ENCODE measurements at regions of chr6 and their contacts with region 1.

Region 1: GRCh38 chr6:107318100-107318736 is 141.1 kb downstream of the PDSS2 start:
- DNase-seq: peak in 3 of 9 experiments; percentile 7 to 49 (median 34)
- ATAC-seq: peak; percentile 49
- H3K4me3 ChIP-seq: no peak overlapping the region
- H3K4me3 Mint-ChIP-seq: no peak overlapping the region
- H3K27ac ChIP-seq: no peak overlapping the region
- H3K27ac Mint-ChIP-seq: no peak overlapping the region
- H3K4me1 ChIP-seq: no peaks in the 10 kb centered on the region
- H3K4me1 Mint-ChIP-seq: peaks cover 3% of the 10 kb centered on the region
- H3K27me3 ChIP-seq: no peaks in the 10 kb centered on the region
- H3K27me3 Mint-ChIP-seq: no peaks in the 10 kb centered on the region
- CTCF ChIP-seq: no peak

Region 2: GRCh38 chr6:107144014-107144413 is 174.2 kb before region 1 on chr6:
- CTCF ChIA-PET with region 1: no interaction called
- POLR2A ChIA-PET with region 1: no interaction called
- intact Hi-C with region 1: no loop called
- DNase-seq: no peak
- ATAC-seq: no peak
- H3K4me3 ChIP-seq: no peak overlapping the region
- H3K4me3 Mint-ChIP-seq: no peak overlapping the region
- H3K27ac ChIP-seq: no peak overlapping the region
- H3K27ac Mint-ChIP-seq: no peak overlapping the region
- H3K4me1 ChIP-seq: no peaks in the 10 kb centered on the region
- H3K4me1 Mint-ChIP-seq: no peaks in the 10 kb centered on the region
- H3K27me3 ChIP-seq: no peaks in the 10 kb centered on the region
- H3K27me3 Mint-ChIP-seq: no peaks in the 10 kb centered on the region
- CTCF ChIP-seq: no peak

Region 3: DNA sequence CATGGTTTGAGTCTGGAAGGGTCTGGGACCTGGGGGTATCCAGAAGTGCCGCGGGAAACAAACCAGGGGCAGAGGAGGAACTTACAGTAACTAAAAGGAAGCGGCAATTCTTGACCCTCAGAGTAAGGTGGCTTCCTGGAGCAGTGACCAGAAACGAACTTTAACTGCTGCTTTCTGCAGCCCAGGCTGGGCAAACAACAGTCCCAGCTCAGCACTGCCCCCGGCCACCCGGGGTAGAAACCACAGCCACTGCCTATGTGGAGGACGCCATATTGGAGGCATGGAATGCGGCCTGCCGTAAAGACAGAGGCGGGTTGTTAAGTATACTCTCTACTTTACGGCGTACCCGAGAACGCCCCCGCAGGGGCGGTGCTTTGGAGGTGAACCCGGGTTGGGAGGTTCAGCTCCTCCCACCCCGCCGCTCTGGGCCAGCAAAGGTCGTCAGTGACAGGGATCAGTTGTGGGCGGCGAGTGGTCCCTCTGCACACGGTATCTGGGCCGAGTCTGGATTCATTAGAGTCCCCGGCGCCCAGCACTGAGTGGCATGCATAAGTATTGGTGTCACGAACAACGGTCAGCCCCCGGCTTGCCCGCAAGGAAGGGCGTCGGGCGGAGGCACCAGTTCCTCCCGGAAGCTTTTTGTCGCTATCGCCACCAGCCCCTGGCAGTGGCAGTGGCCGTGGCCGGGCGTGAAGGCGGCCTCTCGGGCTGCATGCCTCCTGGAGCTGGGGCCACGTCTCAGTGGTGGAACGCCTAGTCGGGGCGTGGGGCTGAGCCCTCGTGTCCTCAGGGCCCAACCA is 141.3 kb after region 1 on chr6 and contains the start of gene PDSS2:
- CTCF ChIA-PET with region 1: no interaction called
- POLR2A ChIA-PET with region 1: no interaction called
- intact Hi-C with region 1: no loop called
- DNase-seq: peak; percentile 93 to 99 (median 96)
- ATAC-seq: peak; percentile 96
- H3K4me3 ChIP-seq: peak within 1 kb of the TSS; percentile 93 to 94
- H3K4me3 Mint-ChIP-seq: peak within 1 kb of the TSS; percentile 98
- H3K27ac ChIP-seq: peak within 1 kb of the TSS; percentile 69 to 82
- H3K27ac Mint-ChIP-seq: peak within 1 kb of the TSS; percentile 98
- H3K4me1 ChIP-seq: peaks cover 14% of the 10 kb centered on the region
- H3K4me1 Mint-ChIP-seq: peaks cover 31% of the 10 kb centered on the region
- H3K27me3 ChIP-seq: no peaks in the 10 kb centered on the region
- H3K27me3 Mint-ChIP-seq: no peaks in the 10 kb centered on the region
- CTCF ChIP-seq: peak; percentile 28
- total RNA-seq, gene PDSS2: 3.7 to 4.7 TPM

Region 4: DNA sequence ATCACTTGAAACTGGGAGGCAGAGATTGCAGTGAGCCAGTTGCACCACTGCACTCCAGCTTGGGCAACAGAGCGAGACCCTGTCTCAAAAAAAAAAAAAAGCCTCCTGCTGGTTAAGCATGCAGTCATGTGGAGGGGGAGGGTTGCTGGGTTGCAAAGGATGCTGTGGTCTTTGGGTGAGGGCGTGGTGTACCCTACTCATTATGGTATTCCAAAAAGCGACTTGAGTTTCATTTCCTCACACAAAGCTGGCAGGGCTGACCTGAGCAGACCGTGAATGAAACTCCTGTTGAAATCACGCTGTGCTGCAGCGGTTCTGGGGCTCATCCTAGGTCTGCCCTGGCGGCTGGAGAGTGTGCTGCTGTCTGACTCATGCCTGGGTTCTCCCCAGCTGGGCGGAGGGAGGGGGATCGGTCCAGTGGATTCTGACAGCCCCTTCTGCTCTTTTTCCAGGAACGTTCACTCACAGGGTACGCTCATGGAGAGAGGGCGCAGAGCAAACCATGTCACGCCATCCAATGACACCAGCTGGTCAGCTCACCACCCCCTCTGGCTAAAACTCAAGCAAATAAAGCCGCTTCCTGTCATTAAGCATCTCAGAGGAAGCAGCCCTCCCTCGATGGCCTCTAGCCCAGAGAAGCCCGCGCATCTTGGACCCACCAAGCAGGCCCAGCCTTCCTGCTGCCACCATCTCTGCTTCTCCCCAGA is 339.7 kb after region 1 on chr6:
- CTCF ChIA-PET with region 1: no interaction called
- POLR2A ChIA-PET with region 1: no interaction called
- intact Hi-C with region 1: loop called in 1 of 2 experiments (anchors 5 kb)
- DNase-seq: peak in 8 of 9 experiments; percentile 29 to 68 (median 52)
- ATAC-seq: peak; percentile 90
- H3K4me3 ChIP-seq: peak overlapping the region; percentile 27 to 49
- H3K4me3 Mint-ChIP-seq: peak overlapping the region; percentile 81
- H3K27ac ChIP-seq: peak overlapping the region; percentile 4 to 47
- H3K27ac Mint-ChIP-seq: peak overlapping the region; percentile 78
- H3K4me1 ChIP-seq: peaks cover 30% of the 10 kb centered on the region
- H3K4me1 Mint-ChIP-seq: peaks cover 35% of the 10 kb centered on the region
- H3K27me3 ChIP-seq: no peaks in the 10 kb centered on the region
- H3K27me3 Mint-ChIP-seq: no peaks in the 10 kb centered on the region
- CTCF ChIP-seq: no peak

Measured in CD8-positive, alpha-beta T cell (primary cell).